Aorta (tissue), 5 donors: ENCODE measurements at regions of chr3 and their contacts with region 1.

Region 1: GRCh38 chr3:127002195-127003174 is 19.6 kb downstream of the PLXNA1 start:
- DNase-seq: peak; percentile 93 to 96
- ATAC-seq: peak; percentile 90
- H3K4me3 ChIP-seq: no peak overlapping the region
- H3K27ac ChIP-seq: peak overlapping the region in 1 of 2 donors; percentile 79
- H3K4me1 ChIP-seq: no peaks in the 10 kb centered on the region
- H3K27me3 ChIP-seq: no peaks in the 10 kb centered on the region

Region 2: DNA sequence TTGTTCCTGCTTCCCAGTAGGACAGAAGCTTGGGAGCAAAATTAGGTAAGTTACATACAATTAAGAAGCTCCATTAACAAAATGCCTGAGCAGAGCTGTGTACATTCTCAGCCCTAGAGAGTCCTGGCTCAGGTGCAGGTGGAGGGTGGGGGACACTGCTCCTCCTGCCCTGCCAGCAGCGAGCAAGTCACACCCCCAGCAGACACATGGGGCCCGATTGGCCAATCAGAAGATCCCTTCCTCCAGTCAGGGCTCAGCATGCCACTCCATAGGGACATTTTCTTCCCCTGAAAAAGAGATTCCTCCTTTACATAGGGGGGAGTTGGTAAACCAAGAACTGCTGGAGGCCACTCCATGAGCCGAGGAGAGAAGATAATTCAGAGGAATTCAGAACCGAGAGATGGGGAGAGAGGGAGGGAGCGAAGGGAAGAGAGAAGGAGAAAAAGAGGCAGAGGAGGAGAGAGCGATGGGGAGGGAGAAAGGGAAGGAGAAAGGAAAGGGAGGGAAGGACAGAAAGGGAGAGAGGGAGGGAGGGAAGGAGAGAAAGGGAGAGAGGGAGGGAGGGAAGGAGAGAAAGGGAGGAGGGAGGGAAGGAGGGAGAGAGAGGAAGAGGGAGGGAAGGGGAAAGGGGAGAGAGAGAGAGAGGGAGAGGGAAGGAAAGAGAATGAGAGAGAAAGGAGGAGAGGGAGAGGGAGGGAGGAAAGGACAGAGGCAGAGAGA is 42.7 kb after region 1 on chr3:
- intact Hi-C with region 1: loop called in 1 of 2 experiments (anchors 5 kb)
- DNase-seq: peak; percentile 53 to 68
- ATAC-seq: no peak
- H3K4me3 ChIP-seq: no peak overlapping the region
- H3K27ac ChIP-seq: peak overlapping the region; percentile 22 to 78
- H3K4me1 ChIP-seq: peaks cover 0 to 4% of the 10 kb centered on the region in 2 donors
- H3K27me3 ChIP-seq: no peaks in the 10 kb centered on the region

Region 3: DNA sequence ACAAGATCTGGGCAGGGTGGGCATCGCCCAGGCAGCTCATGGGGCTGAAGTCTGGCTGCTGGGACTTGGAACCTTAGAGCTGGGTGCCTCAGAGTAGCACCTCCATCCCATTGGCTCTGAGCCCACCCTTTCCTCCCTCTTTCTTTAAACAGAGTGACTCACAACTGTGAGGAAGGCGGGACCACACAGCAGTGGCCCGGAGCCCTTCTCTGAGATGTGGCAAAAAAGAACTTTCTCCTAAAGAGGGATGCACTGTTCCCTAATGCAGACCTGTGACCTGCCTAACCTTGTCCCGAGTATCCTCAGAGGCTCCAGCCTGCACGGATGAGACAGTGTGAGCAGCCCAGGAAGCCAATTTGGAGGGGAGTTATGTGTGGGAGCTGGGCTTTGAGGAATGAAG is 261.8 kb after region 1 on chr3:
- intact Hi-C with region 1: no loop called
- DNase-seq: no peak
- ATAC-seq: no peak
- H3K4me3 ChIP-seq: no peak overlapping the region
- H3K27ac ChIP-seq: no peak overlapping the region
- H3K4me1 ChIP-seq: no peaks in the 10 kb centered on the region
- H3K27me3 ChIP-seq: no peaks in the 10 kb centered on the region

Region 4: DNA sequence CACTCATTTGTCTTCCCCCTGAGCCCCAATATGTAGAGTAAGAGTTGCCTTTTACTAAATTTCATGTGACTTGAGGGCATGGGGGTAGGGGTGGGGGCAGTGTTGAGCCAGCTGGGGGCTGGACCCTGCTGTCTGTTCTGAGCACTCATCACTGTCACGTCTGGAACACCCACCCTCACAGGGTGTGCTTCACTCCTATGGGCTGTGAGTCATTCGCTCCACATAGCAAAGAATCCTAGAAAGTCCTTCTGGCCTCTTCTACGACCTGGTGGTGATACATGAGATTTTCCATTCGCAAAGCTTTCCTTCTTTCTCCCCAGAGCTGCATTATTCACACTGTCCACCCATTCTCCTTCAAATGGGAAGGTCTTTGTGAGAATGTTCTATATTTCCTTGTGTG is 863.5 kb after region 1 on chr3:
- intact Hi-C with region 1: no loop called
- DNase-seq: no peak
- ATAC-seq: no peak
- H3K4me3 ChIP-seq: no peak overlapping the region
- H3K27ac ChIP-seq: no peak overlapping the region
- H3K4me1 ChIP-seq: no peaks in the 10 kb centered on the region
- H3K27me3 ChIP-seq: peaks cover 0 to 2% of the 10 kb centered on the region in 2 donors